A673 (cell line): ENCODE measurements at regions of chr16 and their contacts with region 1.

Region 1: GRCh38 chr16:67561824-67562525 is 351 bp upstream of the CTCF start:
- DNase-seq: peak; percentile 98
- H3K4me3 ChIP-seq: peak overlapping the region; percentile 98
- H3K27ac ChIP-seq: peak overlapping the region; percentile 100
- H3K4me1 ChIP-seq: peaks cover 13% of the 10 kb centered on the region
- H3K27me3 ChIP-seq: no peaks in the 10 kb centered on the region
- CTCF ChIP-seq: no peak

Region 2: DNA sequence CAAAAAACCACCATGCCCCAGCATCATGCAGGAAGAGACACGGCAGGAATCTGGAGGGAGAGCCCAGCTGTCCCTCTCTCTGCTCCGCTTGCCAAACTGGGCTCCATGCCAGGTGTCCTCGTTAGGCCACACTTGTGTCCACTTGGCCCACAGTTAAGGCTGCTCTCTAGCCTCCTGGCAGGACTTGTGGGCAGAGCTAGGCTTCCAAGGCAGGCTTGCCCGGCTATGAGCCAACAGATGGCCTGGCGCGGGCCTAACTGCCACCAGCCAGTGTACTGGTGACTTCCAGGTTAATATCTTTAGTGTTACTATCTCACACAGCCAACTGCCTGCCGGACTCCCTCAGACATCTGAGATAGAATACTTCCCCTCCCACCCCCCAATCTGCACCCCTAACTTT is 91.6 kb before region 1 on chr16:
- CTCF ChIA-PET with region 1: interaction called, 14 read pairs
- POLR2A ChIA-PET with region 1: no interaction called
- intact Hi-C with region 1: no loop called
- DNase-seq: no peak
- H3K4me3 ChIP-seq: no peak overlapping the region
- H3K27ac ChIP-seq: no peak overlapping the region
- H3K4me1 ChIP-seq: peaks cover 3% of the 10 kb centered on the region
- H3K27me3 ChIP-seq: no peaks in the 10 kb centered on the region
- CTCF ChIP-seq: no peak

Region 3: GRCh38 chr16:67613808-67614207 is 51.8 kb after region 1 on chr16:
- CTCF ChIA-PET with region 1: no interaction called
- POLR2A ChIA-PET with region 1: interaction called, 10 read pairs
- intact Hi-C with region 1: no loop called
- DNase-seq: peak; percentile 17
- H3K4me3 ChIP-seq: no peak overlapping the region
- H3K27ac ChIP-seq: no peak overlapping the region
- H3K4me1 ChIP-seq: no peaks in the 10 kb centered on the region
- H3K27me3 ChIP-seq: no peaks in the 10 kb centered on the region
- CTCF ChIP-seq: peak; percentile 46

Region 4: DNA sequence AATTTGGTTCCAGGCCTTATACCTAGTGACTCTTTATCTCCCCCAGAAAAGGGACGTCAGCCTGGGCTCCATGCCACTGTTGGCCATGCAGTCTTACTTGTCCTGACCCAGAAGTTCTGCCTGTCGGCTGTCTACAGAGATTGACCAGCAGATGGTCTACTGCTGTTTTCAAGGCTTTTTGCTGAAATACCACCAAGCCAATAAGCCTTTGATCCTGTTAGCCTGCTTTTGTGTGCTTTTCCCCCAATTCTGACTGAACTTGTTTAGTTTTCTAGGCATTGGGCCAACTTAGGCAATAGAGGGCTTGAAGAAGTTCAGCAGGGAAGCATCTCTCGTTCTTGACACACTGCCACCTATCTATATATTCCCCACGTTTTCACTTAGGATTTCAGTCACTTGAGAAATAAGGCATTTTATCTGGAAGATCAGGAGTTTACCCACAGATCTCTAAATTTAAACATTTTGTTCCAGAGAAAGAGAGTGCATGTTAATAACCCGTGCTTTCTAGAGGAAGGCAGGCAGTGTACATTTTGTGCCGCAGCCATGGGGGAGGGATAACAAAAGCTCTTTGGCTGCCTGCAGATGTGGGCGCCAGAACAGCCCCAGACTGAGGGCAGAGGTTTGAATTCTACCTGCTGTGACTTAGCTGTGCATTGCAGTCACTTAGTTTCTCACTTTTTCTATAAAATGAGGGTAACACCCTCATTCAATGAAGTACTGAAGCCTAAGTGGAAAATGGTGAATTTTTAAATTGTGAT is 70.6 kb after region 1 on chr16:
- CTCF ChIA-PET with region 1: interaction called, 3 read pairs
- POLR2A ChIA-PET with region 1: no interaction called
- intact Hi-C with region 1: loop called (anchors 5 kb)
- DNase-seq: peak; percentile 94
- H3K4me3 ChIP-seq: no peak overlapping the region
- H3K27ac ChIP-seq: peak overlapping the region; percentile 65
- H3K4me1 ChIP-seq: peaks cover 18% of the 10 kb centered on the region
- H3K27me3 ChIP-seq: no peaks in the 10 kb centered on the region
- CTCF ChIP-seq: peak; percentile 45; the same call in 1 of the 2 replicates

Region 5: GRCh38 chr16:67667817-67668494 is 106.0 kb after region 1 on chr16:
- CTCF ChIA-PET with region 1: no interaction called
- POLR2A ChIA-PET with region 1: interaction called, 3 read pairs
- intact Hi-C with region 1: loop called (anchors 5 kb)
- DNase-seq: peak; percentile 96
- H3K4me3 ChIP-seq: no peak overlapping the region
- H3K27ac ChIP-seq: no peak overlapping the region
- H3K4me1 ChIP-seq: peaks cover 12% of the 10 kb centered on the region
- H3K27me3 ChIP-seq: no peaks in the 10 kb centered on the region
- CTCF ChIP-seq: peak; percentile 85